Transverse colon (tissue), 4 donors: ENCODE measurements at regions of chr1 and their contacts with region 1.

Region 1: DNA sequence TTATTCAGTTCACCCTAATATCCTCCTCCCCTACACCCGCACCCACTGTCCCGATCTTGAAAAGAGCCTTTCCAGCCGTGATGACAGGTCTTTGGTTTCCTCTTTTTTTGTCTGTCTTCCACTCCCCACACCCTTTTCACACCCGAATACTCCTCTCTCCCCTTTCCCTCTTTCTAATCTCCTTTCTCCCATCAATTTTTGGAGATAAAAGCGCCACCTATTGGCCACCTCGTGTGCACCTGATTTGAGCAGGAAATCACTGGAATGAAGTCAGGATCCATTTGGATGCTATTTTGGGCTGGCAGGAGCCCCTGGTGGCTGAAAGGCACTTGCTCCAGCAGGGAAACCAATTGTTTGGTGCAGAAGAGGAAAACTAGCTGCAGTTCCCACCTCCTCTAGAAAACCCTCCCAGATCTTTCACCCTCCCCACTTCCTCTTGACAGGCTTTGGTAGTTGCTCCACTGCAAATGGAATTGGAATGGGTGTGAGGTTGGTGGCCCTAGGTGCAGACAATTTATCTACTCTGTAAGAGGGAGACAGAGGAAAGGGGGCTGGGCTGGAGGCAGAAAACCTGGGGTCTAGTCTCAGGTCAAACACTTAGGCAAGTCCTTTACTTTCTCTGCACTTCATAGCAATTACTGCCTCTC is 8.4 kb downstream of the FOXE3 start:
- DNase-seq: no peak
- H3K4me3 ChIP-seq: no peak overlapping the region
- H3K27ac ChIP-seq: no peak overlapping the region
- H3K4me1 ChIP-seq: no peaks in the 10 kb centered on the region
- H3K27me3 ChIP-seq: peaks cover 4% of the 10 kb centered on the region
- CTCF ChIP-seq: peak; percentile 55 to 66 (median 60)
- EP300 ChIP-seq: no peak
- POLR2A ChIP-seq: no peak

Region 2: GRCh38 chr1:47179017-47179987 is 245.2 kb before region 1 on chr1:
- in situ Hi-C with region 1: loop called in 2 of 4 experiments (anchors 25 kb)
- intact Hi-C with region 1: no loop called
- DNase-seq: peak; percentile 92
- H3K4me3 ChIP-seq: peak overlapping the region; percentile 6 to 48 (median 32)
- H3K27ac ChIP-seq: peak overlapping the region; percentile 69 to 80 (median 74)
- H3K4me1 ChIP-seq: peaks cover 9 to 15% (median 12%) of the 10 kb centered on the region in 4 donors
- H3K27me3 ChIP-seq: peaks cover 10% of the 10 kb centered on the region
- CTCF ChIP-seq: peak; percentile 81 to 93 (median 90)
- EP300 ChIP-seq: no peak
- POLR2A ChIP-seq: peak; percentile 51

Region 3: DNA sequence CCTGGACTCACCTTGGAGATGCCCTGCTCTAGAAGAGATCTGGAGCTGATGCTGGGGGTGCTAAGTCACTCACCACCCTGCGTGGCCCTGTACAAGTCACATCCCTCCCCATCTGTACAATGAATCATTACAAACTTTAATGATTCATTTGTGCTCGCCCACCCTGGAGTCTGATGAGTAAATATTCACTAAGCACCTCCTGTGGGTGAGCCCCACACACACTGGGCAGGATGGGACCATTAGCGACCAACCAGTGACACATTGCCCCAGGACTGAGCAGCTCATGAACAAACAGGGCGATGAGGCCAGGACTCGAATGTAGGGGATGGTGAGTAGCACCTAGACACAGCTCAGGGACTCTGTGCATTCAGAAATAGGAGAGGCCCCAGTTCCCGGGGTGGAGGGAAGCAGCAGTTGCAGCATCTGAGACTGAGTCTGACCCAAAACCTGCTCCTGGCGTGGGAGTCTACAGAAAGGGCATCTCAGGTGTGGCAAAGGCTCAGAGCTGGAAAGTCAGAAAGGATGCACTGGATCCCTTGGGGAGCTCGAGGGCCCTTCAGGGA is 216.6 kb before region 1 on chr1:
- in situ Hi-C with region 1: no loop called
- intact Hi-C with region 1: no loop called
- DNase-seq: no peak
- H3K4me3 ChIP-seq: no peak overlapping the region
- H3K27ac ChIP-seq: no peak overlapping the region
- H3K4me1 ChIP-seq: no peaks in the 10 kb centered on the region
- H3K27me3 ChIP-seq: peaks cover 10% of the 10 kb centered on the region
- CTCF ChIP-seq: no peak
- EP300 ChIP-seq: no peak
- POLR2A ChIP-seq: no peak

Region 4: GRCh38 chr1:47351305-47351704 is 73.2 kb before region 1 on chr1:
- in situ Hi-C with region 1: no loop called
- intact Hi-C with region 1: no loop called
- DNase-seq: no peak
- H3K4me3 ChIP-seq: no peak overlapping the region
- H3K27ac ChIP-seq: no peak overlapping the region
- H3K4me1 ChIP-seq: peaks cover 5 to 20% (median 10%) of the 10 kb centered on the region in 4 donors
- H3K27me3 ChIP-seq: no peaks in the 10 kb centered on the region
- CTCF ChIP-seq: no peak
- EP300 ChIP-seq: no peak
- POLR2A ChIP-seq: no peak

Region 5: DNA sequence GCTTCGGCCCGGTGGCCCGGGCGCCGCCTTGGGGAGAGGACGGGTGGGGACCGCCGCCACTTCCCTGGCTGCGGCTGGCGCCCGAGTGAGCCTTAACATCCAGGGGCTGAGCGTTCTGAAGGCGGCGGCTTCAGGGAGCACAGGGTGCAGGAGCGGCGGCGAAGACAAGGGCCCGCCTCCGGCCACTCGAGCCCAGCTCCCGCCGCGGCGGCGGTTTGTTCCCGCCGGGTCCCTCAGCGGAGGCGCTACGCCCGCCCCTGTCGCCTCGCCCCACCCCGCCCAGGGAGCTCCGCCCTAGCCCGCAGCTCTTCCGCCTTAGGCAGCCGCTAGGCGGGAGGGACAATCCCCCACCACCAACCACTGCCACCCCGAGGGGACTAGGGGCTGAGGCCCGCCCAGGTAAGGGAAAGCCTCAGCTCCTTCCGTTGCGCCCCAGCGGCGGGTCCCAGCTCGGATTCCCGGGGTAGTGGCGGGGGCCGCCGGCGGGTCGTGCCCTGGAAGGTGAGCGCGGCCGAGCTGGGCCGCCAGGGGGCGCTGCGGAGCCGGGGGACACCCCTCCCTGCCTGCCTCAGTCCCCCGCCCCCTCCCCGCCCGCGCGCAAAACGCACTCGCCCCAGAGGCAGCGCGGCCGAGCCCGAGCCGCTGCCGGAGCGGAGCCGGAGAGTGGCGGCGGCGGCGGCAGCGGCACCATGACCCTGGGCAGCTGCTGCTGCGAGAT is 13.1 kb after region 1 on chr1 and contains the start of gene FOXD2:
- in situ Hi-C with region 1: no loop called
- intact Hi-C with region 1: no loop called
- DNase-seq: peak; percentile 94
- H3K4me3 ChIP-seq: peak within 1 kb of the TSS; percentile 61 to 85 (median 72)
- H3K27ac ChIP-seq: peak within 1 kb of the TSS; percentile 85 to 95 (median 91)
- H3K4me1 ChIP-seq: peaks cover 4 to 45% (median 28%) of the 10 kb centered on the region in 4 donors
- H3K27me3 ChIP-seq: peaks cover 92% of the 10 kb centered on the region
- CTCF ChIP-seq: peak; percentile 97 to 100 (median 98)
- EP300 ChIP-seq: no peak
- POLR2A ChIP-seq: peak; percentile 83
- total RNA-seq, gene FOXD2: 15.8 to 20.9 (median 17.2) TPM